Breast epithelium (tissue), 4 donors: ENCODE measurements at regions of chr9 and their contacts with region 1.

Region 1: GRCh38 chr9:87243602-87244001 is 254.1 kb upstream of the DAPK1 start:
- DNase-seq: no peak
- H3K4me3 ChIP-seq: no peak overlapping the region
- H3K27ac ChIP-seq: no peak overlapping the region
- H3K4me1 ChIP-seq: no peaks in the 10 kb centered on the region
- H3K27me3 ChIP-seq: no peaks in the 10 kb centered on the region
- CTCF ChIP-seq: no peak
- POLR2A ChIP-seq: no peak

Region 2: GRCh38 chr9:86974421-86974820 is 269.2 kb before region 1 on chr9:
- intact Hi-C with region 1: loop called (anchors 5 kb)
- DNase-seq: no peak
- H3K4me3 ChIP-seq: no peak overlapping the region
- H3K27ac ChIP-seq: no peak overlapping the region
- H3K4me1 ChIP-seq: no peaks in the 10 kb centered on the region
- H3K27me3 ChIP-seq: no peaks in the 10 kb centered on the region
- CTCF ChIP-seq: no peak
- POLR2A ChIP-seq: no peak

Region 3: GRCh38 chr9:87267251-87268070 is 23.9 kb after region 1 on chr9:
- intact Hi-C with region 1: loop called (anchors 2 kb)
- DNase-seq: peak in 1 of 2 donors; percentile 62
- H3K4me3 ChIP-seq: no peak overlapping the region
- H3K27ac ChIP-seq: peak overlapping the region; percentile 77 to 85
- H3K4me1 ChIP-seq: peaks cover 5 to 6% of the 10 kb centered on the region in 2 donors
- H3K27me3 ChIP-seq: no peaks in the 10 kb centered on the region
- CTCF ChIP-seq: no peak
- POLR2A ChIP-seq: no peak

Region 4: DNA sequence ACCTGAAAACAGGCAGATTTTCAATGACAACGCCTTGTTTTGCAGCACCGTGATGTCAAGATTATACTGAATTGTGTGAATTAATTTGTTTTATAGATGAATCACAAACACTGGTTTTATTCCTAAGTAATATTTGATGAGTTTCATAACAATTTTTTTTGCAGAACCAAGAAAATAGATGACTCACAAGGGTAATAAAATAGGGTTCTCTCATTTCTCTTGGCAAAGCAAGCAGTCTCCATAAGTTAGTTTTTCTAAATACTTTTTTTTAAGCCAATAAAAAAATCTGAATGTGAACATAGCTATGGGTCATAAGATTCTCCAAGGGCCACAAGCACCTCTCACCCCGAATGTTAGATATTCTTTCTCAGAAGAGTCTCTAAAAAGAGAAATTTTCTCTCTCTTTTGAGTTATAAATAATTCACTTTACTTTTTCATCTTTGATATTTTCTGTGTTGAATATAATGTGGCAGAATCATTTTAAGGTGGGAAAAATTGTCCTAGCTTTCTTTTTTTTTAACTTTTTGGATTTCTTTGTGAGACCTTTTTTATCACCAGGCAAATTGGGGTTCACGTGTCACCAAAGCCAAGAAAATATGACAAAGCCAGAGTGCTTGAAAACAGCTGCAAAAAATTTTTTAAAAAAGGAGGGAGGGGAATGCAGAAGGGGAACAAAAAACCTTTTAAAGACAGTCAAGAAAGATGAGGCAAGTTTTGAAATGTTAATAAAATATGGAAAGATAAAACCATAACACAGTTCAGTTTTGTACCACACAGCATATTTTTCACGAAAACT is 79.4 kb after region 1 on chr9:
- intact Hi-C with region 1: no loop called
- DNase-seq: no peak
- H3K4me3 ChIP-seq: no peak overlapping the region
- H3K27ac ChIP-seq: no peak overlapping the region
- H3K4me1 ChIP-seq: no peaks in the 10 kb centered on the region
- H3K27me3 ChIP-seq: no peaks in the 10 kb centered on the region
- CTCF ChIP-seq: no peak
- POLR2A ChIP-seq: no peak